ENCODE measurements at regions of chr11 and their contacts with region 1.

Region 1: DNA sequence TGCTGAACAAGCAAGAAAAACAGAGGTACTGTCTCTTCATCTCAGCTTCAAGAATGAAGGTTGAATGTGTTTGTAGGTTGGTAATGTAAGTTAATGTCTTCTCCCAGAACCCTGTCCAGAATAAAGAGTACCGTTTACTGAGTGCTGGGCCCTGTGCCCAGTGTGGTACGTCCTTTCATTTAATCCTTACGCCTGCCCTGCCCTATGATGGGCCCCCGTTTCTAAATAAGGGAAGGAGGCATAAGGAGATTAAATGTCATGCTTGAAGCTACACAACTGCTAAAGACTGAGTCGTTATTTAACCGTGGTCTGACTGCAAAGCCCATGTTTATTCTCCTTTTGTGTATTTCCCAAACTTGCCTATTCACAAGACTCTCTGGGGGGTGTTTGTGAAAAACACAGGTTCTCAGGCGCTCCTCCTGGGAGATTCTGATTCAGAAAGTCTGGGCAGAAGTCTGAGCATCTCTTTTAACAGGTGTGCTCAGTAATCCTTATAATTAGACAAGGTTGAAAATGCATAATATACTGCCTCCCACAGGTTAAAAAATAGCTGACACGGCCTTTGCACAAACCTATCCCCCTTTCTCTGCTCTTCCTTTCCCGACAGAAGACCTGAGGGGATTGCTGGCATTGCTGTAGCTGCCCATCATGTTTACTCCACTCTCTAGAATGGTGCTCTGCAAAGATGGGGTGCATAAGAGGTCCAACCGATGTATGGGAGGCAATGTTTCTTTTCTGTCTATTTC is 56.3 kb upstream of the ZBTB44 start:
- DNase-seq: no peak
- ATAC-seq: peak in 1 of 4 donors; percentile 20
- H3K4me3 ChIP-seq: no peak overlapping the region
- H3K27ac ChIP-seq: no peak overlapping the region
- H3K4me1 ChIP-seq: peaks cover 28% of the 10 kb centered on the region
- H3K27me3 ChIP-seq: no peaks in the 10 kb centered on the region
- CTCF ChIP-seq: no peak

Region 2: GRCh38 chr11:130300567-130300966 is 70.5 kb before region 1 on chr11:
- intact Hi-C with region 1: loop called in 1 of 2 experiments (anchors 5 kb)
- DNase-seq: no peak
- ATAC-seq: peak; percentile 61 to 91 (median 76)
- H3K4me3 ChIP-seq: peak overlapping the region; percentile 41
- H3K27ac ChIP-seq: peak overlapping the region; percentile 73
- H3K4me1 ChIP-seq: peaks cover 14% of the 10 kb centered on the region
- H3K27me3 ChIP-seq: no peaks in the 10 kb centered on the region
- CTCF ChIP-seq: no peak

Region 3: GRCh38 chr11:130314750-130315285 is 56.2 kb before region 1 on chr11 and contains the start of gene ZBTB44:
- intact Hi-C with region 1: loop called (anchors 2 to 5 kb)
- DNase-seq: peak; percentile 93 to 97
- ATAC-seq: peak; percentile 95 to 96 (median 96)
- H3K4me3 ChIP-seq: peak within 1 kb of the TSS; percentile 96
- H3K27ac ChIP-seq: peak within 1 kb of the TSS; percentile 90
- H3K4me1 ChIP-seq: peaks cover 36% of the 10 kb centered on the region
- H3K27me3 ChIP-seq: no peaks in the 10 kb centered on the region
- CTCF ChIP-seq: no peak
- total RNA-seq, gene ZBTB44: 58.6 to 77.2 (median 71.7) TPM

Measured in psoas muscle (tissue), 8 donors.